Naive thymus-derived CD4-positive, alpha-beta T cell (primary cell): ENCODE measurements at regions of chr12 and their contacts with region 1.

Region 1: DNA sequence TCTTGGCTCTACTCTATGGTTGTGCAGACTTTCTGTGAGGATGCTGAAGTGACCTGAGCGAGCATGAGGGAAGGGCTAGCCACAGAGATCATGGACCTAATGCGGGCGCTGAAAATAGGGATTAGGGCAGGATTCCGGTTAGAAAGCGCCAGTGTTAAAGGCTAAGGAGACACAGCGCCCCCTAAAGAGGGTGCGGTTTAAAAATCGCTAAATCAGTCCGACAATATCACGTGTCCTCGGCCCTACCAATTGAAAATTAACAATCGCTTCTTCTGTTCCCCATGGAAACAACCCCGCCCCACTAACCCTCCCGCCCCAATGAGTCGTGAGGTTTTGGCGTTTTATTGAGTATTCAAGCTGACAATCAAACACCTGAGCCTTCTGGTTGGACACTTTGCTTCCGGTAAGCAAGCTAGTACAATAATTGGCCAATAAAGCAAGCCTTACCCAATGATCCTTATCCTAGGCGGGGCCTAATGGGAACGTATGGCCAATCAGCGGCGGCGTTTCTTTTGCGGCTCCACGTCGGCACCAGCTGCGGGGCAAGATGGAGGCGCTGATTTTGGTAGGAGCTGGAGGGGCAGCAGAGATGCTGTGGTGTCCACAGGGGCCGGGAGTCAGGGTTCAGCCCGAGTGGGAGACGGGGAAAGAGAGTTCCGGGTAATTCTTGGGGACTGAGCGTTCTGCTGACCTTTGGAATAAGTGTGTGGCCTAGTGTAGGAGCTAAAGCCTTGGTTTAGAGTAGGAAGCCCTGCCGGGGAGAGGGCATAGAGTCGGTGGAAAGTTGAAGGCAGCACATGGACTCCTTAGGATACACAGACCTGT is at the start of gene COPZ1:
- DNase-seq: peak; percentile 69 to 98 (median 94)
- ATAC-seq: peak; percentile 97
- H3K4me3 ChIP-seq: peak within 1 kb of the TSS; percentile 95
- H3K4me3 Mint-ChIP-seq: peak within 1 kb of the TSS; percentile 87 to 100 (median 95)
- H3K27ac ChIP-seq: peak within 1 kb of the TSS; percentile 80
- H3K27ac Mint-ChIP-seq: peak within 1 kb of the TSS; percentile 91 to 99 (median 95)
- H3K4me1 ChIP-seq: peaks cover 4 to 22% of the 10 kb centered on the region in 2 donors
- H3K4me1 Mint-ChIP-seq: peaks cover 8 to 46% (median 42%) of the 10 kb centered on the region in 7 donors
- H3K27me3 ChIP-seq: no peaks in the 10 kb centered on the region
- H3K27me3 Mint-ChIP-seq: no peaks in the 10 kb centered on the region
- total RNA-seq, gene COPZ1: 47.5 to 141 (median 80.0) TPM

Region 2: DNA sequence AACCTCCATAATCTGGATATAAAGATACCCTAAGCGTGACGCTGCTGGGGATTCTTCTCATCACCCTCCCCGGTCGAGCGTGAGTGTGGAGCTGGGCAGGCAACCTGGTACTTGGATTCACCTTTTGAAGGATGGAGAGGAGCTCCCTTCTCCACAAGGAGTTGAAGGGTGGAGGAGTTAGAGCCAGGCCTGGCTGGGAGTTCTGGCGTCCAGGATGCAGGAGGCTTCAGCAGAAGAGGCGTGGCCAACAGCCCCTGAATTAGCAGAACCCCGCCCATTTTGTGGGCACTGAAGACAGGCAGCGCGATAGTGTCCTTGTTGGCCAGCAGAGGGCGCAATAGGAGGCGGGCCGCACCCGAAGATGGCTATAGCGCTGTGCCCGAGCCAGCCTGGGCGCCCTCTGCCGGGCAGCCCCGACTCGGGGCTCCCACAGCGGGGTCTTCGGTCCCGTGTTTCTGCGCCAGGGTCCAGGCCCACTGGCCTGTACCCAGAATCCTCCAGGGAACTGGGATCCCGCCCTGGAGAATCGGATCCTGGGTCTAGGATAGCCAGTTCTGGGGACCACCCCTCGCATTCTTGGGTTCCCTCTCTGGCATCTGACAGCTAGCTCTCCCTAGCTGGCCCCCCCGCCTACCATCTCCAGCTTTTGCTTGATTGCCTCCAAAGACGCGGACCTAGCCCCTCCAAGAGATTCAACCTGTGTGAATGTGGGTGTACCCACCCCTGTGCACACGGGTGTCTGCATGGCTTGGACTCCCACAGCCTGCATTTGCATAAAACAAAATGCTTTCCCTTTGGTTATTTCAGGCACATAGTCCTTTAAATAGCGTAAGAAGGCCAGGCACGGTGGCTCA is 110.0 kb before region 1 on chr12:
- CTCF ChIA-PET with region 1: no interaction called
- POLR2A ChIA-PET with region 1: no interaction called
- intact Hi-C with region 1: loop called (anchors 1 kb)
- DNase-seq: peak; percentile 80 to 90 (median 89)
- ATAC-seq: peak; percentile 95
- H3K4me3 ChIP-seq: peak overlapping the region; percentile 56
- H3K4me3 Mint-ChIP-seq: peak overlapping the region; percentile 72 to 93 (median 82)
- H3K27ac ChIP-seq: no peak overlapping the region
- H3K27ac Mint-ChIP-seq: peak overlapping the region in 2 of 9 donors; percentile 28 to 52
- H3K4me1 ChIP-seq: peaks cover 25 to 35% of the 10 kb centered on the region in 2 donors
- H3K4me1 Mint-ChIP-seq: peaks cover 18 to 52% (median 31%) of the 10 kb centered on the region in 7 donors
- H3K27me3 ChIP-seq: no peaks in the 10 kb centered on the region
- H3K27me3 Mint-ChIP-seq: peaks cover 0 to 40% (median 5%) of the 10 kb centered on the region in 5 donors

Region 3: GRCh38 chr12:54220092-54220557 is 104.7 kb before region 1 on chr12:
- CTCF ChIA-PET with region 1: no interaction called
- POLR2A ChIA-PET with region 1: no interaction called
- intact Hi-C with region 1: loop called (anchors 1 kb)
- DNase-seq: peak; percentile 37 to 65 (median 58)
- ATAC-seq: peak; percentile 74
- H3K4me3 ChIP-seq: no peak overlapping the region
- H3K4me3 Mint-ChIP-seq: peak overlapping the region in 2 of 10 donors; percentile 12 to 31
- H3K27ac ChIP-seq: no peak overlapping the region
- H3K27ac Mint-ChIP-seq: no peak overlapping the region
- H3K4me1 ChIP-seq: peaks cover 23 to 25% of the 10 kb centered on the region in 2 donors
- H3K4me1 Mint-ChIP-seq: peaks cover 18 to 42% (median 28%) of the 10 kb centered on the region in 7 donors
- H3K27me3 ChIP-seq: no peaks in the 10 kb centered on the region
- H3K27me3 Mint-ChIP-seq: peaks cover 0 to 19% (median 4%) of the 10 kb centered on the region in 5 donors

Region 4: GRCh38 chr12:54251667-54252284 is 73.1 kb before region 1 on chr12:
- CTCF ChIA-PET with region 1: interaction called, 5 read pairs
- POLR2A ChIA-PET with region 1: no interaction called
- intact Hi-C with region 1: loop called in 1 of 2 experiments (anchors 1 kb)
- DNase-seq: peak in 7 of 9 donors; percentile 9 to 54 (median 47)
- ATAC-seq: peak; percentile 75
- H3K4me3 ChIP-seq: no peak overlapping the region
- H3K4me3 Mint-ChIP-seq: peak overlapping the region in 1 of 10 donors; percentile 18
- H3K27ac ChIP-seq: no peak overlapping the region
- H3K27ac Mint-ChIP-seq: peak overlapping the region in 2 of 9 donors; percentile 48 to 76
- H3K4me1 ChIP-seq: no peaks in the 10 kb centered on the region
- H3K4me1 Mint-ChIP-seq: peaks cover 7 to 23% (median 17%) of the 10 kb centered on the region in 7 donors
- H3K27me3 ChIP-seq: no peaks in the 10 kb centered on the region
- H3K27me3 Mint-ChIP-seq: no peaks in the 10 kb centered on the region

Region 5: GRCh38 chr12:54294152-54294952 is 30.5 kb before region 1 on chr12:
- CTCF ChIA-PET with region 1: interaction called, 4 read pairs
- POLR2A ChIA-PET with region 1: interaction called, 7 read pairs
- intact Hi-C with region 1: loop called (anchors 1 kb)
- DNase-seq: peak in 8 of 9 donors; percentile 22 to 70 (median 44)
- ATAC-seq: peak; percentile 76
- H3K4me3 ChIP-seq: no peak overlapping the region
- H3K4me3 Mint-ChIP-seq: no peak overlapping the region
- H3K27ac ChIP-seq: no peak overlapping the region
- H3K27ac Mint-ChIP-seq: no peak overlapping the region
- H3K4me1 ChIP-seq: no peaks in the 10 kb centered on the region
- H3K4me1 Mint-ChIP-seq: peaks cover 5 to 22% (median 6%) of the 10 kb centered on the region in 7 donors
- H3K27me3 ChIP-seq: no peaks in the 10 kb centered on the region
- H3K27me3 Mint-ChIP-seq: peaks cover 0 to 20% (median 5%) of the 10 kb centered on the region in 5 donors

Region 6: GRCh38 chr12:54337280-54337842 is 12.5 kb after region 1 on chr12:
- CTCF ChIA-PET with region 1: interaction called, 13 read pairs
- POLR2A ChIA-PET with region 1: interaction called, 19 read pairs
- intact Hi-C with region 1: no loop called
- DNase-seq: no peak
- ATAC-seq: no peak
- H3K4me3 ChIP-seq: no peak overlapping the region
- H3K4me3 Mint-ChIP-seq: no peak overlapping the region
- H3K27ac ChIP-seq: no peak overlapping the region
- H3K27ac Mint-ChIP-seq: peak overlapping the region in 2 of 9 donors; percentile 19 to 25
- H3K4me1 ChIP-seq: peaks cover 4 to 13% of the 10 kb centered on the region in 2 donors
- H3K4me1 Mint-ChIP-seq: peaks cover 7 to 66% (median 32%) of the 10 kb centered on the region in 7 donors
- H3K27me3 ChIP-seq: no peaks in the 10 kb centered on the region
- H3K27me3 Mint-ChIP-seq: no peaks in the 10 kb centered on the region

Region 7: DNA sequence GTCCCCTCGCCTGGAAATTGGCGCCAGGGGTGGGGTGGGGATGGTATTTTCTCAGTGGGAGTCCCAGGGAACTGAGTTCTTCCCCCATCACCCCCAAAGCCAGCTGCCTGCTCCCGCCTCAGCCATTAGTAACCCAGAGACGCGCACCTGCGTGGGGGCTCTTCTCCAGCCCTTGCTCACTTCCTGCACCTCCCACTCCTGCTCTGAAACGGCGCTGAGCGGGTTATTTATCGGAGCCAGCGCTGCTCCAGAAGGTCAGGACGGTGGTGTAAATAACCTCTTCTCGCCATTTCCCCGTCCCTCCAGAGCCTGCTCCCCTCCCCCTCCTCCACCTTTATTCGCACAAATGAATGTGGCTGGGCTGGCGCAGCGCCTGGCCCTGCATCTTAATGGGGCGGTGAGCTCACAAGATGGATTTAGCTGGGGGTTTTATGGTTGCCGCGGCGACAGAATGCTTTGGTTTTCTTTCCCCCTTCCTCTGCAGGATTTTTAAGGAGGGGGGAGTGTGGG is 27.2 kb after region 1 on chr12:
- CTCF ChIA-PET with region 1: interaction called, 10 read pairs
- POLR2A ChIA-PET with region 1: interaction called, 5 read pairs
- intact Hi-C with region 1: no loop called
- DNase-seq: peak in 8 of 9 donors; percentile 11 to 62 (median 35)
- ATAC-seq: peak; percentile 65
- H3K4me3 ChIP-seq: peak overlapping the region; percentile 43
- H3K4me3 Mint-ChIP-seq: peak overlapping the region; percentile 70 to 93 (median 85)
- H3K27ac ChIP-seq: peak overlapping the region; percentile 63
- H3K27ac Mint-ChIP-seq: peak overlapping the region; percentile 58 to 93 (median 85)
- H3K4me1 ChIP-seq: peaks cover 0 to 9% of the 10 kb centered on the region in 2 donors
- H3K4me1 Mint-ChIP-seq: peaks cover 11 to 30% (median 18%) of the 10 kb centered on the region in 7 donors
- H3K27me3 ChIP-seq: no peaks in the 10 kb centered on the region
- H3K27me3 Mint-ChIP-seq: no peaks in the 10 kb centered on the region